ENCODE measurements at regions of chr4 and their contacts with region 1.

Region 1: GRCh38 chr4:173505924-173506518 is 24.0 kb downstream of the HAND2 start:
- DNase-seq: peak; percentile 45 to 57
- ATAC-seq: peak; percentile 88 to 97
- H3K4me3 ChIP-seq: no peak overlapping the region
- H3K27ac ChIP-seq: no peak overlapping the region
- H3K4me1 ChIP-seq: no peaks in the 10 kb centered on the region
- CTCF ChIP-seq: peak; percentile 60
- EP300 ChIP-seq: no peak
- POLR2A ChIP-seq: no peak
- RAD21 ChIP-seq: peak; percentile 77 to 78

Region 2: DNA sequence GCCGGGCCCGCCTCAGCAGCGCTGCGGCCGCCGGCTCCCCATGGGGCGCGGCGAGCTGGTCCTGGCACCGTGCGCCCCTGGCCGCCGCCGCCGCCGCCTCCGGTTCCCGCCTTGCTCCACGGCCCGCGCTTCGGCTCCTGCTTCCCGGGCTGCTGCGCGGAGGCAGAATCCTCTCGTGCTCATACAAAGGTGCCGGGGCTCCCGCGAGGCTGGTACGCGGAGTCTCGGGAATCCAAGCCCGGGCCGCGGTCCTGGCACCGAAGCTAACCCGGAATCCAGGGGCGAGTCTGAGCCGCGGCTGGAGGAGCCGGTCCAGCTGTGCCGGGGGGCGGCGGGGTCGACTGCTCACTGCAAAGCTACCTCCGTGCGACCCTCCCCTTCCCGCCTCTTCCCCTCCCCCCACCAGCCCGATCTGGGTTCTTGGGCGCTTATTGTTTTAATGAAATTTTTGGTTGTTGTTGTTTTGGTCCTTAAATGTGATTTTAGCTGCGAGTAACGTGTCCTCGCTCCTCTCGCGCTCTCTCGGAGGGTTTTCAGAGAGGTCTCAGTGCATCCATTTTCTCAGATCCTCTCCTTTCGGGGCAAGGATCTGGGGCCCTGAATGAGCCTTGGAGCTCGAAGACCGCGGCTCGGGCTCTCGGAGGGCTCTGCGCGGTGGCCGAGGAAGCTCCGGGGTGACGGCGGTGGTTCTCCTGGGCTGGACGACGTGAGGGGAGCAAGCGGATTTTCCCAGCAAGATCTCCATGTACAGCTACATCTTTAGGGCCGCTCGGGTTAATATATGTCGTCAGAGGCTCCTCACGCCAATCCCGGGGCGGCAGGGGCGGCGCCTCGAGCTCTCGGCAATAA is 23.7 kb after region 1 on chr4 and contains the start of gene HAND2:
- CTCF ChIA-PET with region 1: interaction called, 4 read pairs
- POLR2A ChIA-PET with region 1: interaction called, 12 read pairs
- DNase-seq: peak; percentile 52 to 60
- ATAC-seq: peak; percentile 79 to 92
- H3K4me3 ChIP-seq: peak within 1 kb of the TSS; percentile 63
- H3K27ac ChIP-seq: peak within 1 kb of the TSS; percentile 61 to 71
- H3K4me1 ChIP-seq: peaks cover 2% of the 10 kb centered on the region; the same call in 1 of the 3 replicates
- CTCF ChIP-seq: no peak
- EP300 ChIP-seq: no peak
- POLR2A ChIP-seq: no peak
- RAD21 ChIP-seq: no peak
- polyA plus RNA-seq, gene HAND2: 0.44 and 0.53 TPM in 2 replicates

Region 3: DNA sequence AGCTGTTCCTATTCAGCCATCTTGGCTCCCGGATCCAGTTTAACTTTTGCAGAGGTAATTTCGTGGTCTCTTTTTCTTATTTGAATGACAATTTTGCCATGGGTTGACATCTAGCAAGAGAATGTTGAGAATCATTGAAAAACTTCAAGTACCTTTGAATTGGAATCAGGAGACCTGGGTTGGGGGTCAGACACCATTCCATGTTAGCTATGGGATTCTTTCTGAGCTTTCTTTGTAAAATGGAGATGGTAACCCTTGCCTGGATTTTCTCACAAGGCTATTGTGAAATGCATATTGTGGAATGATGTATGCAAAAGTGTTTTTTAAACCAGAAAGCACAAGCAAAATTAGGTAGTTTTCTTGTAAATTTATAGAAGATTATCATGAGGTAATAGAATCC is 103.1 kb after region 1 on chr4:
- CTCF ChIA-PET with region 1: no interaction called
- POLR2A ChIA-PET with region 1: no interaction called
- DNase-seq: no peak
- ATAC-seq: peak; percentile 50 to 70; a peak in 4 of 6 replicates
- H3K4me3 ChIP-seq: peak overlapping the region; percentile 54
- H3K27ac ChIP-seq: peak overlapping the region; percentile 77 to 85
- H3K4me1 ChIP-seq: no peaks in the 10 kb centered on the region
- CTCF ChIP-seq: no peak
- EP300 ChIP-seq: no peak
- POLR2A ChIP-seq: no peak
- RAD21 ChIP-seq: no peak

Region 4: GRCh38 chr4:173990126-173990868 is 484.3 kb after region 1 on chr4:
- CTCF ChIA-PET with region 1: interaction called, 16 read pairs
- POLR2A ChIA-PET with region 1: no interaction called
- DNase-seq: peak; percentile 8 to 32
- ATAC-seq: peak in 1 of 2 experiments; percentile 75; a peak in 4 of 6 replicates
- H3K4me3 ChIP-seq: no peak overlapping the region
- H3K27ac ChIP-seq: no peak overlapping the region
- H3K4me1 ChIP-seq: no peaks in the 10 kb centered on the region
- CTCF ChIP-seq: peak; percentile 45
- EP300 ChIP-seq: no peak
- POLR2A ChIP-seq: no peak
- RAD21 ChIP-seq: peak; percentile 49 to 50; a peak in 4 of 5 replicates

Region 5: GRCh38 chr4:174120446-174121295 is 614.6 kb after region 1 on chr4:
- CTCF ChIA-PET with region 1: interaction called, 13 read pairs
- POLR2A ChIA-PET with region 1: no interaction called
- DNase-seq: peak; percentile 19 to 81
- ATAC-seq: peak; percentile 95 to 97
- H3K4me3 ChIP-seq: peak overlapping the region; percentile 46
- H3K27ac ChIP-seq: peak overlapping the region; percentile 41 to 45; a peak in 2 of 6 replicates
- H3K4me1 ChIP-seq: no peaks in the 10 kb centered on the region
- CTCF ChIP-seq: peak; percentile 53
- EP300 ChIP-seq: no peak
- POLR2A ChIP-seq: no peak; the same call in 1 of the 2 replicates
- RAD21 ChIP-seq: peak; percentile 45 to 52; a peak in 4 of 5 replicates

Measured in A549 (cell line).